ENCODE measurements at regions of chr12 and their contacts with region 1.

Region 1: DNA sequence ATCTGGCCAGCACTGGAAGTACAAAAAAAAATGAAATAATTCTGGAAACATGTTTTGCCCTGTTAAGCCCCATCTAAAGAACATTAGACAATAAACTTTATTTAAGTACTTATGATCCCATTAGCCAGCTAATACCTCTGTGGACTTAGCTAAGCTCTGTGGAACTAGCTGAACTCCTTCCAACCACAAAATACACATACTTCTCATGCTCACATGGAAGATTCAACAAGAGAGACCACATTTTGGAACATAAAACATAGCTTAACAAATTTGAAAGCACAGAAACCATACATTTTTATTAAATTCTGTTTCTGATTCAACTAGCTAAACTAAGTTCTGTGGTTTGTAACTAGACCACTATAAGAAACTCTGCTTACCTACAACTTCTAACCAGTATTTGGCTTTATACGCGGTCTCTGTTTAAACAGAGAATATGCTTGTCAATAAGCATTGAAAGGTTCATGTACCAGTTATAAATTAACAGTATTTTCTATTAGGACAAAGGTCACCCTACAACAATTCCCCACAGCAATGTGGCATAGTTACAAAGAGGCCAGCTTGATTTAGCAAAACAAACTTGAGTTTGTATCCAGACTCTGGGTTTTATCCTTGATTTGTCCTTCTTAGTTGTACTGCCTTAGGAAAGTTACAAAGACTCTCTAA is 300.1 kb downstream of the C12orf50 start:
- DNase-seq: no peak
- ATAC-seq: no peak

Region 2: DNA sequence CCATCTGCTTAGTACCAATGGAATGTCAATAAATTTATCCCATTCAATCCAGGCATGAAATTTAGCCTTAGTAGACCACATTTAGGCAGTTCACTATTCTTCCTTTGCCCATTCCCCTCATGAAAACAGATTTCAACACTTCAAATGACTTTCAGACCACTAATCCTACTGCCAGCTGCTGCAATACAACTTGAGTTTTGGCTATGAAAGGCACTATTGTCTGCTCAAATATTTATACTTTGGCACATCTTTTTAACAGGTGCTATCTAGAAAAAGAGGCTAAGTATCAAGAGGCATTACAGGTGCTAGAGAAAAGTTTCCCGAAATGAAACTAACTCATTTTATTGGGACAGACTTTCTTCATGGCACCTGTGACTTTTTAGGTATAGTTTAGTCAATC is 199.6 kb before region 1 on chr12:
- intact Hi-C with region 1: loop called (anchors 10 kb)
- DNase-seq: no peak
- ATAC-seq: no peak